ENCODE measurements at regions of chr10 and their contacts with region 1.

Region 1: GRCh38 chr10:117174439-117175214 is 22.7 kb upstream of the KCNK18 start:
- DNase-seq: peak; percentile 93
- ATAC-seq: peak; percentile 91
- H3K4me3 Mint-ChIP-seq: peak overlapping the region; percentile 76
- H3K27ac Mint-ChIP-seq: peak overlapping the region; percentile 37
- H3K4me1 Mint-ChIP-seq: peaks cover 22% of the 10 kb centered on the region
- H3K27me3 Mint-ChIP-seq: peaks cover 34% of the 10 kb centered on the region

Region 2: GRCh38 chr10:116687633-116688032 is 487.0 kb before region 1 on chr10:
- CTCF ChIA-PET with region 1: interaction called, 16 read pairs
- POLR2A ChIA-PET with region 1: no interaction called
- intact Hi-C with region 1: loop called (anchors 1 to 2 kb)
- DNase-seq: no peak
- ATAC-seq: no peak
- H3K4me3 Mint-ChIP-seq: no peak overlapping the region
- H3K27ac Mint-ChIP-seq: no peak overlapping the region
- H3K4me1 Mint-ChIP-seq: no peaks in the 10 kb centered on the region
- H3K27me3 Mint-ChIP-seq: peaks cover 24% of the 10 kb centered on the region

Region 3: DNA sequence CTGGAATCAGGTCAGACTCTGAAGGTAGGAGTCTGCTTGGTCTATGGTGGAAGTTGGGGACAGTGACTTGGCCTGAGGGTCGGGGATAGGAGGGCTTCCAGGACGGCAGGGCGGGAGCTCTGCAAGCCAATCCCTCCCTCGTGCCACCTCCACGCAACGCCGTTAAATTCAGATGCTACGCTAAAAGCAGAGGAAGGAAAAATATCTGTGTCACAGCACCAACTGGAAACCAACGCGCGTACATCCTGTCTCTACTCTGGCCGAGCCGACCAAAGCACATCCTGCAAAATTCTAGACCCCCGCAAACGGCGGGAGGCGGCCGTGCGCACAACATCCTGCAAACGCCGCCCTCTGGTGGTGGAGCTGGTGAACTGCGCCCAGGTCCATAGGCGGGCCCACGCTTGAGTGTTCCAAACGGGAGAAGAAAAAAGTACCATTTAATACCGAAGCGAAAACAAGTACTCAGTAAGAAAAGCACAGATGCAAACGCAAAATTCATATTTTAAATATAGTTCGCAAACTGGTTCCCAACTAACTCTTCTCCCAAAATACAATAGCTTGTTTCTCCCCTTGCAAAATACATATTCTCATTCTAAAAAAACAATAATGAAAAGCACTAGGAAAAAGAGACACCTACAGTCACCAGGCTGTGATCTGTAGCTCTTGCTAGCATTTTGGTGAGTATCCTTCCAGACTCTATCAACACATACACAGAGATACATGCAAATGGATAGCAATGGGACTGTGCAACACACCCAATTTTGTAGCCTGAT is 386.5 kb before region 1 on chr10:
- CTCF ChIA-PET with region 1: interaction called, 31 read pairs
- POLR2A ChIA-PET with region 1: no interaction called
- intact Hi-C with region 1: loop called in 1 of 2 experiments (anchors 2 kb)
- DNase-seq: peak; percentile 88
- ATAC-seq: peak; percentile 89
- H3K4me3 Mint-ChIP-seq: peak overlapping the region; percentile 41
- H3K27ac Mint-ChIP-seq: peak overlapping the region; percentile 37
- H3K4me1 Mint-ChIP-seq: peaks cover 21% of the 10 kb centered on the region
- H3K27me3 Mint-ChIP-seq: peaks cover 26% of the 10 kb centered on the region

Region 4: GRCh38 chr10:117005027-117005526 is 169.6 kb before region 1 on chr10 and contains the start of gene SHTN1:
- CTCF ChIA-PET with region 1: interaction called, 3 read pairs
- POLR2A ChIA-PET with region 1: no interaction called
- intact Hi-C with region 1: loop called (anchors 2 to 10 kb)
- DNase-seq: peak; percentile 65
- ATAC-seq: peak; percentile 86
- H3K4me3 Mint-ChIP-seq: peak within 1 kb of the TSS; percentile 65
- H3K27ac Mint-ChIP-seq: no peak within 1 kb of the TSS
- H3K4me1 Mint-ChIP-seq: no peaks in the 10 kb centered on the region
- H3K27me3 Mint-ChIP-seq: peaks cover 38% of the 10 kb centered on the region
- total RNA-seq, gene SHTN1: 0.37 to 0.43 TPM

Region 5: DNA sequence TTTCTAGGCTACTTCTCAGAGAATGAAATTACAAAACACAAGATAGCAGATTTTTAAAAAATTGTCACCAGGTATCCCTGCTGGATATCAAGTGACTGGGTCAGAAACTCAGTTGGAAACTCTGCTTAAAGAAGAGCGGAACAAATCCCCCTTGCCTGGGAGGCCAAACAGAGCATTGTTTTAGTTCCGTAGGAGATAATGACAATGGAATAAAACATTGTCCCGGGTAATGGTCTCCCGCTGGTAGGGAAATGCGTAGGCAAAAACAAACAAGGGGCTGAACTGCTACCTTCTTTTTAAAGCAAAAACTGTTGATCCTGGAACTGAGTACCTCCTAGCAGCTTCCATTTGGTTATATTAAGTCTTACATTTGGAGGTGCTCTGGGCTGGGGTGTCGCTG is 15.2 kb before region 1 on chr10:
- CTCF ChIA-PET with region 1: interaction called, 17 read pairs
- POLR2A ChIA-PET with region 1: no interaction called
- intact Hi-C with region 1: no loop called
- DNase-seq: no peak
- ATAC-seq: no peak
- H3K4me3 Mint-ChIP-seq: no peak overlapping the region
- H3K27ac Mint-ChIP-seq: no peak overlapping the region
- H3K4me1 Mint-ChIP-seq: peaks cover 14% of the 10 kb centered on the region
- H3K27me3 Mint-ChIP-seq: peaks cover 71% of the 10 kb centered on the region

Region 6: DNA sequence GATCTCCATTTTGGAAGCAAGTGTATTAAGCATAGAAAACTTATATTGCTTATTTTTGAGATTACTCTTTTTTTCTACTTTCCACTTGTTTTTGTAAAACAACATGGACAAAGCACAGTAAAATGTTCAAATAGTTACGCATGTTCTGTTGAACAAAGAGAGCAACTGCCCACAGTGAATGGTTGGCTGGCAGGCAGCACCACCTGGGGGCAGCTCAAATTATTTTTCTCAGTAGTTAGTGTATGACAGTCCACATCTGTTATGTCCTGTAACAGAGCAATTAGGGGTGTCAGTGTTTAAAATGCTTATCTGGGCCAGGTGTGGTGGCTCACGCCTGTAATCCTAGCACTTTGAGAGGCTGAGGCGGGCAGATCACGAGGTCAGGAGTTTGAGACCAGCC is 1626.3 kb after region 1 on chr10:
- CTCF ChIA-PET with region 1: no interaction called
- POLR2A ChIA-PET with region 1: no interaction called
- intact Hi-C with region 1: no loop called
- DNase-seq: peak; percentile 30
- ATAC-seq: no peak
- H3K4me3 Mint-ChIP-seq: no peak overlapping the region
- H3K27ac Mint-ChIP-seq: no peak overlapping the region
- H3K4me1 Mint-ChIP-seq: no peaks in the 10 kb centered on the region
- H3K27me3 Mint-ChIP-seq: peaks cover 7% of the 10 kb centered on the region

Measured in activated CD4-positive, alpha-beta T cell treated with anti-CD3 and anti-CD28 coated beads for 36 hours (primary cell).